ENCODE measurements at regions of chr14 and their contacts with region 1.

Region 1: GRCh38 chr14:34340025-34340625 is 121.9 kb downstream of the SPTSSA start:
- DNase-seq: no peak
- H3K4me3 ChIP-seq: no peak overlapping the region
- H3K27me3 ChIP-seq: no peaks in the 10 kb centered on the region
- CTCF ChIP-seq: no peak

Region 2: DNA sequence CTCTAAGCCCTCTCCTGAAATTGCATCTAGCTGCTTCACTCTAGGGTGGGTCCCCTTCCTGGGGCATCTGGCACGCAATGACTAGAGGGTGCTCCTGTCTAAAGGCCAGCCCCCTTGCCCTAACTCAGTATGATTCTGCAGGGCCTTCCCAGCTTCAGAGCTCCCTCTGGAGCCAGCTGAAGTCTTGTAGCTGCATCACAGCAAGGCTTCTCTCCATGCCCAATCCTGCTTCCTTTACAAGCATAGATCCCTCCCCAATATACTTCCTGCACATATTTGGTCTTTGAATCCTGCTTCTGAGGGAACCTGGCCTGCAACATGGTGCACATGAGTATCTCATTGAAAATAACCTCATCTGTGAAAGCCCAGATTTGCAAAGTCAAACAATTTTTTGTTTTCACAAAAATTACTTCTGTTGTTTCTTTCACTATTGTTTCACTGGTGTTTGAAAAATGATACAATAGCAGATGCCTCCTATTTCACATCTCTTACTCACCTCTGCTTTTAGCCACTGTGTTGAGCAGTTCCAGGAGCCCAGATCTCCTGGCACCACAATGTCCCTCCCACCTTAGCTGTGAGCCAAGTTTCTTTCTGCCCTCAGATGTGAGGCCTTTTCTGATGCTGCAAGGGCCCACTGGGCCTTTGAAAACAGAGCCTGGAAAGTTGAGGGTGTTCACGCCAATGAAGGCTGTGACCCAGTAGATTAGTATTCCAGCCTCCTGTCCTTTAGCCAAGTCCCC is 219.7 kb before region 1 on chr14:
- CTCF ChIA-PET with region 1: no interaction called
- POLR2A ChIA-PET with region 1: no interaction called
- DNase-seq: no peak
- H3K4me3 ChIP-seq: no peak overlapping the region
- H3K27me3 ChIP-seq: peaks cover 1% of the 10 kb centered on the region; the same call in 1 of the 2 replicates
- CTCF ChIP-seq: no peak

Region 3: GRCh38 chr14:34322940-34323418 is 17.1 kb before region 1 on chr14:
- CTCF ChIA-PET with region 1: interaction called, 10 read pairs
- POLR2A ChIA-PET with region 1: no interaction called
- DNase-seq: no peak
- H3K4me3 ChIP-seq: no peak overlapping the region
- H3K27me3 ChIP-seq: peaks cover 2% of the 10 kb centered on the region; the same call in 1 of the 2 replicates
- CTCF ChIP-seq: peak; percentile 77

Region 4: GRCh38 chr14:34403643-34404042 is 63.5 kb after region 1 on chr14:
- CTCF ChIA-PET with region 1: no interaction called
- POLR2A ChIA-PET with region 1: no interaction called
- DNase-seq: no peak
- H3K4me3 ChIP-seq: no peak overlapping the region
- H3K27me3 ChIP-seq: no peaks in the 10 kb centered on the region; the same call in 1 of the 2 replicates
- CTCF ChIP-seq: no peak

Region 5: DNA sequence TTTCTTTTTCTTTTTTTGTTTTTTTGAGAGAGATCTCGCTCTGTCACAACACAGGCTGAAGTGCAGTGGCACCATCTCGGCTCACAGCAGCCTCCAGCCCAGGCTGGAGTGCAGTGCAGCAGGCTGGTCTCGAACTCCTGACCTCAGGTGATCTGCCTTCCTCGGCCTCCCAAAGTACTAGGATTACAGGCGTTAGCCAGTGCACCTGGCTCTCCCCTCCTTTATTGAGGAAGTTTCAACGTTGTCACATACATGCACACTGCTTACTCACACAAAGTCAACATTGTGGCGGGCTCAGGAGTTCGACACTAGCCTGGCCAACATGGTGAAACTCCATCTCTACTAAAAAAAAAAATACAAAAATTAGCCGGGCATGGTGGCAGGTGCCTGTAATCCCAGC is 167.3 kb after region 1 on chr14:
- CTCF ChIA-PET with region 1: no interaction called
- POLR2A ChIA-PET with region 1: interaction called, 17 read pairs
- DNase-seq: no peak
- H3K4me3 ChIP-seq: no peak overlapping the region
- H3K27me3 ChIP-seq: no peaks in the 10 kb centered on the region
- CTCF ChIP-seq: no peak